ENCODE measurements at regions of chr5 and their contacts with region 1.

Region 1: DNA sequence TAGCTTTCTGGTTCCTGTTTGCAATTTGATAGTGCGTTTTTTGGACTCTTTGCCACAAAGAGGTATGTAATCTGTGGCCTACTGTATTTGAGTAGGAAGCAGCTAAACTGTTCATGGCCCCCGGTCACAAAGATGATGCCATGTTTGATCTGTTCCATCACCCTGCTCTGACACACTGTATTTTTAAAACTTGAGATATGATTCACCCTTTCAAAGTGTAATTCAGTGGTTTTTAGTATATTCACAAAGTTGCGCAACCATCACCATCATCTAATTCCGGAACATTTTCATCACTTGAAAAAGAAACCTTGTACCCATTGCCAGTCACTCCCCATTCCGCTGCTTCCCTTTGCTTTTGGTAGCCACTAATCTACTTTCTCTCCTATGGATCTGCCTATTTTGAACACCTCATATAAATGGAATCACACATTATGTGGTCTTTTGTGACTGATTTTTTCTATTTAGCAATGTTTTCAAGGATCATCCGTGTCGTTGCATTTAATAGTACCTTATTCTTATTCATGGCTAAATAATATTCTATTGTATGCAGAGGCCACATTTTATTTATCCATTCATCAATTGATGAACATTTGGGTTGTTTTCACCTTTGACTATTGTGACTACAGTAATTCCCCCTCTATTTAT is 141.6 kb downstream of the NR3C1 start:
- DNase-seq: peak; percentile 28
- H3K4me3 Mint-ChIP-seq: no peak overlapping the region
- H3K27ac Mint-ChIP-seq: no peak overlapping the region
- H3K4me1 Mint-ChIP-seq: peaks cover 17% of the 10 kb centered on the region
- H3K27me3 Mint-ChIP-seq: no peaks in the 10 kb centered on the region

Region 2: DNA sequence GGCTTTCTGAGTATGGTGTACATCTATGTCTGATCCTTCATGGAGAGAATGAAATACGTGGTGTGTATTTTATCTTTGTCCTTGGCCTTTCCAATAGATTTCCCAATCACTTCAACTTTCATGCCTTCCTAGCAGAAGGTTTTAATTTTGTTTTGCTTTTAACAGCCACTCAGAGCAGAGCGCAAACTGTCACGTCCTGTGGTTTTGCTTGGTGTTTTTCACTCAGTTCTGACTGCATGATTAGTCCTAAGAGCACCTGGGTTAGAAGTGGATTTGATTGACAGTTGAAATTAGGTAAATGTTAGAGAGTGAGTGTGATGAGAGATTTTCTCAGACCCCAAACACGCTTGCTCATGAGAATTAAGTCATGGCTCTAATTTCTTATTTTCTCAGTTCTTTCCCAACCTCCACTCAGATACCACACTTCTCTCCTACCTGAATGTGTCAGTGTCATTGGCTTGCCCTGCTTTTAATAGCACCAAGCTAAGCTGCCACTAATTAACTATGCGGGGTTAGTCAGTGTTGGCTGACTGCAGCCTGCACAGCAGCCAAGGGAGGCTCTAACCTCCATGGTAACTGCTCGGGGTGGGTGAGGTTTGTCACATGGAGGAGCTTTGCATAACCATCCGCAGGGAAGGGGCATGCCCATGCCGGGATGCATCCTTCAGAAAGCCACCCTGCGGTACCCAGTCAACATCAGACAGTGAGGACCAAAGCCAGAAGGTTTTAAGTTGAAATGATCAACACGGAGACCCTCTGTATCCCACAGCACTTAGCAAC is 31.8 kb before region 1 on chr5:
- CTCF ChIA-PET with region 1: no interaction called
- POLR2A ChIA-PET with region 1: no interaction called
- intact Hi-C with region 1: loop called (anchors 2 kb)
- DNase-seq: peak; percentile 71
- H3K4me3 Mint-ChIP-seq: peak overlapping the region; percentile 63
- H3K27ac Mint-ChIP-seq: peak overlapping the region; percentile 81
- H3K4me1 Mint-ChIP-seq: peaks cover 29% of the 10 kb centered on the region
- H3K27me3 Mint-ChIP-seq: no peaks in the 10 kb centered on the region

Measured in activated CD4-positive, alpha-beta memory T cell treated with anti-CD3 and anti-CD28 coated beads for 36 hours (primary cell).